Psoas muscle (tissue), 8 donors: ENCODE measurements at regions of chr2 and their contacts with region 1.

Region 1: GRCh38 chr2:237213315-237214022 is 127.8 kb downstream of the COPS8 start:
- DNase-seq: peak; percentile 67 to 71
- ATAC-seq: peak in 3 of 4 donors; percentile 58 to 67 (median 66)
- H3K4me3 ChIP-seq: no peak overlapping the region
- H3K27ac ChIP-seq: no peak overlapping the region
- H3K4me1 ChIP-seq: no peaks in the 10 kb centered on the region
- H3K27me3 ChIP-seq: peaks cover 0 to 4% (median 0%) of the 10 kb centered on the region in 3 donors
- CTCF ChIP-seq: no peak

Region 2: DNA sequence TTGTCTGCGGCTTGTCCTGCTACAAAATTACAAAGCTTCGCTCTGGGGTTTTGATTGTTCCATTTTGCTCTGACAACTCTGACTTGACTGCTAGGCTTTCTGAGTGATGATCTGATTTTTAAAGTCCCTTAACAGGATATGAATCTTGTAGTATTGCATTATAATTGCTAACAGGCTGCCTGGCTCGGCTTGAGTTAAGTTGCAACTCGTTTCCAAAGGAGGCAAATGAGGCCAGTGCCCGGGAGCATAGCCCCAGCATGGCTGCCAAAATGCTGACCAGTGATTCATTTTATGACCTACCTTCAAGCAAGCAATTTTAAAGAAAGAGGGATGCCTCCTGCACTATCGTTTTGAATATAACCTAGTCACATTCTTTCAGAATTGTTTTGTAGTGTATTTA is 65.1 kb after region 1 on chr2:
- intact Hi-C with region 1: loop called in 1 of 2 experiments (anchors 5 kb)
- DNase-seq: peak; percentile 82 to 91
- ATAC-seq: peak; percentile 87 to 97 (median 90)
- H3K4me3 ChIP-seq: peak overlapping the region; percentile 57
- H3K27ac ChIP-seq: peak overlapping the region; percentile 76
- H3K4me1 ChIP-seq: peaks cover 27% of the 10 kb centered on the region
- H3K27me3 ChIP-seq: no peaks in the 10 kb centered on the region
- CTCF ChIP-seq: no peak